ENCODE measurements at regions of chr2 and their contacts with region 1.

Region 1: GRCh38 chr2:218418717-218419458 is at the start of gene VIL1:
- DNase-seq: no peak
- H3K4me3 ChIP-seq: no peak within 1 kb of the TSS
- H3K27ac ChIP-seq: no peak within 1 kb of the TSS
- H3K4me1 ChIP-seq: no peaks in the 10 kb centered on the region
- H3K27me3 ChIP-seq: no peaks in the 10 kb centered on the region
- CTCF ChIP-seq: no peak
- POLR2A ChIP-seq: no peak
- total RNA-seq, gene VIL1: not detected

Region 2: DNA sequence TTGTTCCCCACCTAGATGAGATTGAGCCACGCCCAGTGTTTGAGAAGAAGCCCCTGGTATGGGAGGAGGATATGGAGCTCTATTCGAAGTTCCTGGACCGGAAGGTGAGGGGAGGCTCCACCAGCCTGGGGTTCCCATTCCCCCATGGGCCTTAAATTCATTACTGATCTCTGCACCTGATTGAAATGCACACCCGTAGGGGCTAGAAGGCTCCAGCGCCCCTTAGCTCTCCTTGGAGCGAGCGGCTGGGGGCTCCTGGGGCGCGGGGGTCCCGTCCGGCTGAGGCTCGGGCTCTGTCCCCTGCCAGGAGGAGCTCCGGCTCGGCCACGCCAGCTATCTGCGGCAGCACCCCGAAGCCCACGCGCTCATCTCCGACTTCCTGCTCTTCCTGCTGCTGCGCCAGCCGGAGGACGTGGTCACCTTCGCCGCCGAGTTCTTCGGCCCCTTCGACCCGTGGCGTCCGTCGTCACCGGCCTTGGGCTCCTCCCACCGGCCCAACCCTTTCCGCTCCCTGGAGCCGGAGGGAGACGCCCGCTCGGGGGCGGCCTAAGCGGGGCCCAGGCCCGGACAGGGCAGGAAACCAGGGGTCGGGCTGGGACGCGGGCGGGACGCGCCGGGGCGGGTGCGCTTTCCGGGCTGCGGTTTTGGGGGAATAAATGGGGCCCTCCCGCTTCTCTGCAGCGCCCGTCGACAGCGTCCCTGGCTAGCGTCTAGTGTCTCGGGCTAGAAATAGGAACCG is 51.3 kb before region 1 on chr2:
- intact Hi-C with region 1: no loop called
- DNase-seq: peak; percentile 46
- H3K4me3 ChIP-seq: peak overlapping the region; percentile 51 to 70 (median 60)
- H3K27ac ChIP-seq: peak overlapping the region; percentile 83 to 93 (median 92)
- H3K4me1 ChIP-seq: peaks cover 0 to 18% (median 6%) of the 10 kb centered on the region in 3 donors
- H3K27me3 ChIP-seq: no peaks in the 10 kb centered on the region
- CTCF ChIP-seq: no peak
- POLR2A ChIP-seq: peak in 3 of 4 donors; percentile 37 to 92 (median 88)

Region 3: DNA sequence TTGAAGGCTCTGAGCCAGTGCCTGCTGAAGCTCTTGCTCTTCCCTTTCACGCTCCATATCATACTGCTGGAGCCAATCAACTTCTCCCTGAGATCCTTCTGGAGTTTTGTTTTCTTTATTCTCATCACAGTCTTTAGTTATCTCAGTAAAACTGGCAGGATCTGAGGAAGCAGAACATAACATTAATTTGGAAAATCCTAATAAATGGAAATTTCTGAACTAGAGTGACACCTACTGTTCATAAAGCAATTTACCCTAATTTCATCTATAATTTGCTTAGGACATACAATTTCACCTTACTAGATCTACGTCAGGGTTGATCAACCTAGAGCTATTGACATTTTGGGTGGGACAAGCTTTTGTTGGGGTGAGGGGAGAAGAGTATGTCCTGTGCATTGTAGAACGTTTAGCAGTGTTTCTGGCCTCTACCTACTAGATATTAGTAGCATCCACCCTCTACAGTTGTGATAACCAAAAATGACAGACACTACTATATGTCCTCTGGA is 47.2 kb after region 1 on chr2:
- intact Hi-C with region 1: loop called (anchors 5 kb)
- DNase-seq: no peak
- H3K4me3 ChIP-seq: no peak overlapping the region
- H3K27ac ChIP-seq: no peak overlapping the region
- H3K4me1 ChIP-seq: no peaks in the 10 kb centered on the region
- H3K27me3 ChIP-seq: no peaks in the 10 kb centered on the region
- CTCF ChIP-seq: peak in 5 of 6 experiments; percentile 31 to 55 (median 40)
- POLR2A ChIP-seq: no peak